Common myeloid progenitor, CD34-positive (primary cell): ENCODE measurements at regions of chr3 and their contacts with region 1.

Region 1: DNA sequence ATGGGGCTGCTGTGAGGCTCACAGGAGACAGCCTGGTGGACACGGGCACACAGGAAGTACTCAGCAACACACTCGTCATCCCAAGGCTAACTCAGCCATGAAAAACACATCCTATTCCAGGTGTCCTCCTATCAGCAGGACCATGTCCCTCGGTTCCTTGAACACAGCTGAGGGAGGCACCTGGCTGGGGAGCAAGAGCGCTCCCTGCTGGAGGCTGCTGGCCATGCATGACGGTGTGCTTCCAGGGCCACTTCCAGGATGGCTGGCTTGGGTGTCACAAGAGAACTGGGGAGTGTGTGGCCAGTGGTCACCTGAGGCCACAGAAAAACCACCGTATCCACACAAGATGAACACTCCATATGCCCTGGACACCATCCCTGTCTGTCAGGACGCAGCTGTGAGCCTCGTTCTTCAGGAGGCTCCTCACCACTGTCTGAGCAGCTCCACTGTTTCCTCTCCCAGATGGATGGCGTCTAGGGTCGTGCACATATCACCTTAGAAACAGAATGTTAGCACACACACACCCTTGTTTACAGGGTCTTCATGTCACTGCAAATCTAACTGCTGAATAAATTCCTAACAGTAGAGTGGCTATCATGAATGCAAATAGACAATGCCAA is 31.0 kb downstream of the POC1A start:
- DNase-seq: peak; percentile 68 to 79 (median 70)
- H3K4me3 ChIP-seq: no peak overlapping the region
- H3K27ac ChIP-seq: no peak overlapping the region
- H3K4me1 ChIP-seq: peaks cover 10 to 44% (median 38%) of the 10 kb centered on the region in 4 experiments
- H3K27me3 ChIP-seq: no peaks in the 10 kb centered on the region

Region 2: DNA sequence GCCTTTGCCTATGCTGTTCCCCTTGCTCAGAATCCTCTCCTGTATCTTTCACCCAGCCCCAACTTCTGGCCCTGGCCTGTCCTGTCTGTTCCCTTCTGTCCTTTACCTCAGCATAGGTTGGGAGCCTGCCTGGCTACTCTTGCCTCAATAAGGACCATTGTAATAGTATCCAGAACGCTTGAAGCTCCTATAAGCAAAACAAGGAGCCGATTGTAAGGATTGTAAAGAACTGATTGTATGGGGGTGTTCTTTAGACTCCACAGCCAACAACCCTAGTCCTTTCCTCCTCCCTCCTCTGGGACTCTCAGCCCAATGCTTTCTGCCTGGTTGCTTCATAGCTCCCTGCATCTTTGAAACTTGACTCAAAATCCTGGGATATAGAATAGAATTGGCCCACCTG is 603.4 kb before region 1 on chr3:
- CTCF ChIA-PET with region 1: no interaction called
- POLR2A ChIA-PET with region 1: no interaction called
- DNase-seq: no peak
- H3K4me3 ChIP-seq: no peak overlapping the region
- H3K27ac ChIP-seq: no peak overlapping the region
- H3K4me1 ChIP-seq: peaks cover 0 to 11% (median 6%) of the 10 kb centered on the region in 4 experiments
- H3K27me3 ChIP-seq: no peaks in the 10 kb centered on the region

Region 3: GRCh38 chr3:52001443-52001974 is 121.7 kb before region 1 on chr3:
- CTCF ChIA-PET with region 1: interaction called, 107 read pairs
- POLR2A ChIA-PET with region 1: interaction called, 3 read pairs
- DNase-seq: peak; percentile 83 to 91 (median 88)
- H3K4me3 ChIP-seq: peak overlapping the region in 2 of 7 experiments; percentile 11 to 25
- H3K27ac ChIP-seq: no peak overlapping the region
- H3K4me1 ChIP-seq: peaks cover 0 to 32% (median 19%) of the 10 kb centered on the region in 4 experiments
- H3K27me3 ChIP-seq: no peaks in the 10 kb centered on the region

Region 4: GRCh38 chr3:52041118-52041731 is 82.0 kb before region 1 on chr3:
- CTCF ChIA-PET with region 1: interaction called, 13 read pairs
- POLR2A ChIA-PET with region 1: no interaction called
- DNase-seq: no peak
- H3K4me3 ChIP-seq: no peak overlapping the region
- H3K27ac ChIP-seq: no peak overlapping the region
- H3K4me1 ChIP-seq: peaks cover 0 to 11% (median 6%) of the 10 kb centered on the region in 4 experiments
- H3K27me3 ChIP-seq: no peaks in the 10 kb centered on the region

Region 5: GRCh38 chr3:52088445-52089367 is 34.5 kb before region 1 on chr3:
- CTCF ChIA-PET with region 1: interaction called, 27 read pairs
- POLR2A ChIA-PET with region 1: no interaction called
- DNase-seq: no peak
- H3K4me3 ChIP-seq: peak overlapping the region in 1 of 7 experiments; percentile 12
- H3K27ac ChIP-seq: no peak overlapping the region
- H3K4me1 ChIP-seq: peaks cover 5 to 60% (median 42%) of the 10 kb centered on the region in 4 experiments
- H3K27me3 ChIP-seq: no peaks in the 10 kb centered on the region

Region 6: DNA sequence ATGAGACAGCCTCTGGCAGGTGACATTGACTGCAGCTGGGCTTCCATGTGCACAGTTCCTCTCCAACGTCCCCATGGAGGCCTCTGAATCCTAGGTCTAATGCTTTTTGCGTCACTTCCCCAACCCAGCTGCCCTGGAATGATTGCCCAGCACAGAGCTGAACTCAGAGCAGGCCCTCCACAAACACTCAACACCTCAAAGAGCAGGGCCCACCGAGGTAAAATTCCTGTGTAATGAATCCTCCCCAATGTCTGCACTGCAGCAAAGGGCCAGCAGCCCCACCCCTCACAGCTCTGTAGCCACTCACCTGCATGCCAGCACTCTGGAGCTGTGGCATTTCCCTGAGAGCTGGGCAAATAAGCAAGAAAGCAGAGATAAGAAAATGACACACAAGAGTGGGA is 24.2 kb before region 1 on chr3:
- CTCF ChIA-PET with region 1: interaction called, 16 read pairs
- POLR2A ChIA-PET with region 1: no interaction called
- DNase-seq: no peak
- H3K4me3 ChIP-seq: no peak overlapping the region
- H3K27ac ChIP-seq: no peak overlapping the region
- H3K4me1 ChIP-seq: peaks cover 0 to 5% (median 0%) of the 10 kb centered on the region in 4 experiments
- H3K27me3 ChIP-seq: no peaks in the 10 kb centered on the region

Region 7: DNA sequence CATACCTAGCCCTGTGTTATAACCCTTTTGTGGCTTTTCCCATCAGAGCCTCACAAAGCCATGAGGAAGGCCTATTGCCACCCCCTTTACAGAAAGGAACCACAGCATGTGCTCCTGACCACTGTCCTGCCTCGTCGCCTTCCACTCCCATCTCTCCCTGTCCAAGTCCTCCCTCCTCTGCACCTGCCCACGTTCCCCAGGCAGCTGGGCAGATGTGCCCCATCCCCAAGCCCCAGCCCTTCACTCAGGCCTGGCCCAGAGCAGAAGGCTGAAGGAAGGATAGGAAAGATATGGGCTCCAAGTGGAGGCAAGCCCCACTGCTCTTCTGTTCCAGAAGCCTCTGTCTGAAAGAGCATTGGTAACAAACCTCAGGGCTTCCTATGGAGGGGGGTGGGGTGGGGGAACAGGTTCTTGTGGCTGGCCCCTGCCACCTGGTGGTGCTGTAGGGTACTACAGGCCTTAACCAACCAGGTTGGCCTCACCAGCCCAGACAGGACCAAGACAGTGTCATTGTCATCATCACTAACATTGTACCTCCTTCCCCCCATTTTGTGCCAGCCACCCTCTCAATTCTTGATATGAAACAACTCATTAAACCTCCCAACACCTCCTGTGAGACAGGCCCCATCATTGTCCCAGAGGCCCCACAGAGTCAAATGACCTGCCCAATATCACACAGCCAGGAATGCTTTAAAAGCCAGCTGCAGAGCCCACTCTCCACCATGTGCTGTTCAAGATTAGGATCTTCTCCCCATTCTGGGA is 21.0 kb after region 1 on chr3:
- CTCF ChIA-PET with region 1: interaction called, 35 read pairs
- POLR2A ChIA-PET with region 1: no interaction called
- DNase-seq: peak; percentile 86 to 94 (median 91)
- H3K4me3 ChIP-seq: no peak overlapping the region
- H3K27ac ChIP-seq: no peak overlapping the region
- H3K4me1 ChIP-seq: peaks cover 0 to 4% (median 4%) of the 10 kb centered on the region in 4 experiments
- H3K27me3 ChIP-seq: no peaks in the 10 kb centered on the region

Region 8: DNA sequence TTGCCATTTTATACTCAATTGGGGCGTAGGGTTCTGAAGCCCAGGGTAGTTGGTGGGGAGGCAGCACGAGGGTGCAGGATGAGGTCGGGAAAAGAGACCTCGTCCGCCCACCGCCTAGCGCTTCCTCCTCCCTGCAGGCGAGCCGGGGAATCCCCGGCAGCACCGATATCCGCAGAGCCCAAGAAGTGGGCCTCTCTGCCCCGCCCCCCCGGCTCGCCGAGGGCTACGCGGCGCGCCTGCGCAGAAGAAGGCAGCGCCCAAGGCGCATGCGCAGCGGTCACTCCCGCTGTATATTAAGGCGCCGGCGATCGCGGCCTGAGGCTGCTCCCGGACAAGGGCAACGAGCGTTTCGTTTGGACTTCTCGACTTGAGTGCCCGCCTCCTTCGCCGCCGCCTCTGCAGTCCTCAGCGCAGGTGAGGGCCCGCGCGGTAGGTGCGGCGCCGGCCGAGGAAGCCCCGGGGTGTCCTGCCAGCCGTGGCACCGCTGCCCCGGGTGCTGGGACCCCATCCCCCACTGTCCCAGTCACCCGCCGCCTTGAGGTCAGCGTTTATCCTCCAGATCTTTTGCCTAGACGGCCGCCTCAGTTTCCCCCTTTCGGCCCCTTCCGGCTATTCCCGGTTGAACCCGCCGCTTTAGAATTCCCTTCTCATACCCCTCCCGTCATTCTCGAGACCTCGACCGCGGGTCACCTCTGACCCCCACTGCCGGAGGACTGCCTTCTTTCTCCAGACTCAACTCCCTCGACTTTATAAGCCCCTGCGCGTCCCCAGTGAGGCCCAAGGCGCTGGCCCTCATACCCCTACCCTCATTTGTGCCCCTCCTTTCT is 74.8 kb after region 1 on chr3 and contains the start of gene ALAS1:
- CTCF ChIA-PET with region 1: no interaction called
- POLR2A ChIA-PET with region 1: no interaction called
- DNase-seq: peak; percentile 85 to 91 (median 87)
- H3K4me3 ChIP-seq: peak within 1 kb of the TSS; percentile 80 to 99 (median 91)
- H3K27ac ChIP-seq: peak within 1 kb of the TSS; percentile 58 to 86
- H3K4me1 ChIP-seq: peaks cover 0 to 54% (median 25%) of the 10 kb centered on the region in 4 experiments
- H3K27me3 ChIP-seq: no peaks in the 10 kb centered on the region

Region 9: DNA sequence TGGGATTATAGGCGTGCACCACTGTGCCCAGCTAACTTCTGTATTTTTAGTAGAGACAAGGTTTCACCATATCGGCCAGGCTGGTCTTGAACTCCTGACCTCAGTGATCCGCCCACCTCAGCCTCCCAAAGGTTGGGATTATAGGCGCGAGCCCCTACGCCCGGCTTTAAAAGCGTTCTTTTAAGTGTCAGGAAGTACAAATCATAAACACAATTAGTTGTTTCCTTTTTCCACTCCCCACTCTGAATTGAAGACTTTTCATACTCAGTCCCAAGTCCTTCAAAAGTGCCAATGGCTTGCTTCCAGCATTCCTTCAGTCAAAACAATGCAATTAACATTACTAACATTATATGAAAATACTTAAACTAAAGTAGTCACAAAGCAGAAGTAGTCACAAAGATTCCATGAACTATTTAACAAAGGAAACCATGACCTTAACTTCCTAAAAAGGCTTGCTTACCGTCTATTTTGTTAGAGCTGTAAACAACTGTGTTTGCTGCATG is 147.1 kb after region 1 on chr3:
- CTCF ChIA-PET with region 1: no interaction called
- POLR2A ChIA-PET with region 1: no interaction called
- DNase-seq: peak in 2 of 3 donors; percentile 41 to 48
- H3K4me3 ChIP-seq: peak overlapping the region in 2 of 7 experiments; percentile 41 to 50
- H3K27ac ChIP-seq: peak overlapping the region; percentile 40 to 59
- H3K4me1 ChIP-seq: peaks cover 9 to 29% (median 17%) of the 10 kb centered on the region in 4 experiments
- H3K27me3 ChIP-seq: no peaks in the 10 kb centered on the region